K562 (cell line): ENCODE measurements at regions of chr20 and their contacts with region 1.

Region 1: DNA sequence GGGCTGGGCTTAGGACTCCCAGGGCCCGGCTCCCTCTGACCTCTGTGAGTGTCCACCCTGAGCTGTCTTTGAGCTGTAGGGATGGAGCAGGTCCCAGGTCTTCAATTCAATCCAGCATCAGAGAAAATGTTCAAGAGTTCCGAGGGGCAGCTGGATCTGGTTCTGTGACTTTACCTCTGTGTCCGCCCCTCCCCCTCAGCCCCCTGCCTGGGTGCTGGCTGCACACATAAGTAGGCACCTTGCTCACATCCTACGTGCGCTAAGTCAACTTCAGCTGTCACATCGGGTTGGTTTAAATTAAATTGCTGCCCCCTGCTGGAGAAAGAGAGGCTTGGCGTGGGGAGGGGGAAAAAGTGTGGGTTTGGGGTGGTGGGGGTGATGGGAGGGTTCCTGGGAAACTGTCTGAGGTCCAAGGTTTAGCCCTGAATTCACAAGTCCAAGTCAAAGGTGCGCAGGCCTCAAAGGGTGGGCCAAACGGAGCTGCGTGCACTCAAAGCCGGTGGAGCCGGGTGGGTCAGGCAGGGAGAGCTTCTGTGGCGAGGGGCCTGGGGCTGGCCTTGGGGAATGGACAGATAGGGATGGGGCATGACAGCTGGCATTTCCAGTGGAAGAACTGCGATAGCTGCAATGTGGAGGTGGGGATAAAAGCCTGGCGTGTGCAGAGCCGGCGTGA is 3.0 kb downstream of the WFDC5 start:
- DNase-seq: peak; percentile 43 to 54 (median 46)
- ATAC-seq: peak; percentile 72
- H3K4me3 ChIP-seq: no peak overlapping the region
- H3K27ac ChIP-seq: no peak overlapping the region
- H3K4me1 ChIP-seq: peaks cover 0 to 3% of the 10 kb centered on the region in 2 experiments; a peak in 1 of 5 replicates
- H3K27me3 ChIP-seq: peaks cover 14 to 51% of the 10 kb centered on the region in 2 experiments; a peak in 4 of 5 replicates
- CTCF ChIP-seq: peak; percentile 6 to 53 (median 48); a peak in 5 of 6 replicates
- EP300 ChIP-seq: no peak
- POLR2A ChIP-seq: no peak
- RAD21 ChIP-seq: peak in 1 of 2 experiments; percentile 32; a peak in 2 of 4 replicates

Region 2: DNA sequence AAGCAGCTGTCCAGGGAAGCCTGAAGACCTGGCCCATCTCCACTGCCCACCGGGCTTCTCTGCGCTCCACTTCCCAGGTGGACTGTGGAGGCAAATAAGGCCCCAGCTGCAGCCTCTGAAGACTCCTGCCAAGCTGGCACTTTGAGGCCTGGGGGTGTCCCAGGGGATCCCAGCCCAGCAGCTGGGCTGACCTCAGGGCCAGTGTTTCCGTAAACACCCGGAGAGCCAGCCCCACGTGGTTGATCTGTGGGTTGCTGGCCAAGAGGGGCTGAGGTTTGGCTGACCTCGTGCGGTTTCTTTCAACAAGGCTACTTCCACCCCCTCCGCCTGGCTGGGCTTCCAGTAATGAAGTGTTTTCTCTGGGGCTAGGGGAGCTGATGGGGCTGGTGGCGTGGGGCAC is 409.2 kb before region 1 on chr20:
- CTCF ChIA-PET with region 1: no interaction called
- POLR2A ChIA-PET with region 1: no interaction called
- in situ Hi-C with region 1: no loop called
- intact Hi-C with region 1: no loop called
- DNase-seq: no peak
- ATAC-seq: peak; percentile 51; the same call in 2 of the 3 replicates
- H3K4me3 ChIP-seq: no peak overlapping the region
- H3K27ac ChIP-seq: no peak overlapping the region
- H3K4me1 ChIP-seq: no peaks in the 10 kb centered on the region
- H3K27me3 ChIP-seq: peaks cover 33 to 55% of the 10 kb centered on the region in 2 experiments; a peak in 4 of 5 replicates
- CTCF ChIP-seq: no peak
- EP300 ChIP-seq: no peak
- POLR2A ChIP-seq: no peak
- RAD21 ChIP-seq: no peak

Region 3: DNA sequence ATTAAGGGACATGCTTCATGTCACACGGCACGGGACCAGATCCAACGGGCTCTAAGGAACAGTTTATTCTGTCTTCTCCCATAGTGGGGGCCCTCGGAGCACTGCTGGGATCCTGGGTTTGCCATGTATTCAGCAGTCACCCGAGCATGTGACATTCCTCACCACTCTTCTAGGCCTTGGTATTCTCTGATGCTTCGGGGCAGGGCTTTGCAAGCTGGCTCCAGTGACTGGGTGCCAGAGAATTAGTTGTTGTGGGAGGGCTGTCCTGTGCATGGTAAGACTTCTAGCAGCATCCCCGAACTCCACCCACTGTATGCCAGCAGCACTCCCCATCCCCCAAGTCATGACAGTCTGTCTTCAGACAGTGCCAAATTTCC is 391.3 kb before region 1 on chr20:
- CTCF ChIA-PET with region 1: no interaction called
- POLR2A ChIA-PET with region 1: no interaction called
- in situ Hi-C with region 1: no loop called
- intact Hi-C with region 1: no loop called
- DNase-seq: no peak
- ATAC-seq: no peak
- H3K4me3 ChIP-seq: no peak overlapping the region
- H3K27ac ChIP-seq: no peak overlapping the region
- H3K4me1 ChIP-seq: peaks cover 0 to 10% of the 10 kb centered on the region in 2 experiments; a peak in 2 of 5 replicates
- H3K27me3 ChIP-seq: peaks cover 34 to 74% of the 10 kb centered on the region in 2 experiments
- CTCF ChIP-seq: no peak
- EP300 ChIP-seq: no peak
- POLR2A ChIP-seq: no peak
- RAD21 ChIP-seq: no peak

Region 4: DNA sequence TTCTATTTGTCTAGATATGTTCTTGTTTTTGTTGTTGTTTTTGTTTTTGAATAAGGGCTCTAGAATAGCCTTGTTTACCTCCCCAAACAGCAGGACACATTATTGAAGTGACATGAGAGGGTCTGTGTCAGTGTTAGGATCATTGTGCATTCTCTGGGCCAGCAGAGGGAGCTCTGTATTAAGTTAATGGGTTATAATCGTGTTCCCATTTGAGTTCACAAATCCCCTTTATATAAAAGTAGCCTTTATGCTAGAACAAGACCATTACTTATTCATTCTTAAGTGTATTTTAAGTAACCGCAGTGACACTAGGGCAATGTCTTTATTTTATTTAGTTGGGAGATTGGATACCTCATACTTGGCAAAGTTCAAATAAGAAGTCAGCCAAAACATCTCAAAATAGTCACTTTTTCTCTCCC is 100.8 kb before region 1 on chr20:
- CTCF ChIA-PET with region 1: interaction called, 4 read pairs
- POLR2A ChIA-PET with region 1: no interaction called
- in situ Hi-C with region 1: no loop called
- intact Hi-C with region 1: loop called (anchors 5 kb)
- DNase-seq: peak; percentile 20 to 60 (median 34)
- ATAC-seq: peak; percentile 85
- H3K4me3 ChIP-seq: no peak overlapping the region
- H3K27ac ChIP-seq: no peak overlapping the region
- H3K4me1 ChIP-seq: no peaks in the 10 kb centered on the region
- H3K27me3 ChIP-seq: no peaks in the 10 kb centered on the region
- CTCF ChIP-seq: peak; percentile 55 to 86 (median 73)
- EP300 ChIP-seq: no peak
- POLR2A ChIP-seq: no peak
- RAD21 ChIP-seq: peak; percentile 53 to 84; a peak in 3 of 4 replicates

Region 5: DNA sequence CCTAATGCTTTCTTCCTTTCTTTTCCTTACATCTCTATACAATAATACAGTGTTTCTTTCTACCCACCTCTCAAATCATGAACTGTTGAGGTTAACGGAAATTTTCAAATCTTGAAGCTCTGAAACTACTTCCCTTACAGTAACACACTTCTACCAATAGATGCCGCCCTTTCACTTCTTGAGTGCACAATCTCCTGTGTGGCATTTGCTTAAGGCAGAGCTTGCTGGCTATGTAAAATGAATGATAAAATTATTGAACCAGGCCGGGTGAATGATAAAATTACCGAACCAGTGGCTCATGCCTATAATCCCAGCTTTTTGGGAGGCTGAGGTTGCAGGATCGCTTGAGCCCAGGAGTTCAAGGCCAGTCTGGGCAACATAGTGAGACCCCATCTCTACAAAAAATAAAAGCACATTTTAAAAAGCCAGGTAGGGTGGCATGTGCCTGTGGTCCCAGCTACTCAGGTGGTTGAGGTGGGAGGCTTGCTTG is 67.8 kb before region 1 on chr20:
- CTCF ChIA-PET with region 1: no interaction called
- POLR2A ChIA-PET with region 1: interaction called, 5 read pairs
- in situ Hi-C with region 1: no loop called
- intact Hi-C with region 1: loop called (anchors 5 kb)
- DNase-seq: peak; percentile 34 to 73 (median 52)
- ATAC-seq: peak; percentile 89
- H3K4me3 ChIP-seq: no peak overlapping the region
- H3K27ac ChIP-seq: no peak overlapping the region
- H3K4me1 ChIP-seq: no peaks in the 10 kb centered on the region
- H3K27me3 ChIP-seq: no peaks in the 10 kb centered on the region
- CTCF ChIP-seq: peak; percentile 70 to 92 (median 82)
- EP300 ChIP-seq: no peak
- POLR2A ChIP-seq: no peak
- RAD21 ChIP-seq: peak; percentile 74 to 79

Region 6: GRCh38 chr20:45266977-45267376 is 155.0 kb after region 1 on chr20:
- CTCF ChIA-PET with region 1: no interaction called
- POLR2A ChIA-PET with region 1: no interaction called
- in situ Hi-C with region 1: no loop called
- intact Hi-C with region 1: no loop called
- DNase-seq: no peak
- ATAC-seq: no peak
- H3K4me3 ChIP-seq: no peak overlapping the region
- H3K27ac ChIP-seq: no peak overlapping the region
- H3K4me1 ChIP-seq: no peaks in the 10 kb centered on the region
- H3K27me3 ChIP-seq: peaks cover 6% of the 10 kb centered on the region in 2 experiments
- CTCF ChIP-seq: no peak
- EP300 ChIP-seq: no peak
- POLR2A ChIP-seq: no peak
- RAD21 ChIP-seq: no peak

Region 7: DNA sequence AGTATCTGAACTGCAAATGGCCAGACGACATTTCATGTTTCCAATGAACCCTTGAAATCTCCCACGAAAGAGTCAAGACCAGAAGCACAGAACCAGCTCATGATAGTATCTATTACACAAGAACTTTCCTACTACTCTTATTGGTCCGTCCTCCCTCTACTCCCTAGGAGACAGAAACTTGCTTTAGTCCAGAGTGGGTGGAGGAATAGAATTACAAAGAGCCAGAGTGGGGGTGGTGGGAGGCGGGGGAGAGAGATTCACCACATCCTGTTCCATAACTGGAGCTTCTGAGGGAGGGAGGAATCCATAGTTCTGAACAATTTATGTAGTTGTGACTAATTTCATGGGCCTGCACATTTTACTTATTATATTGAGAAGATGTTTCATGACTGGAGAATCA is 499.1 kb after region 1 on chr20:
- CTCF ChIA-PET with region 1: no interaction called
- POLR2A ChIA-PET with region 1: no interaction called
- in situ Hi-C with region 1: no loop called
- intact Hi-C with region 1: no loop called
- DNase-seq: peak in 2 of 4 experiments; percentile 41 to 42
- ATAC-seq: peak; percentile 52; the same call in 2 of the 3 replicates
- H3K4me3 ChIP-seq: no peak overlapping the region
- H3K27ac ChIP-seq: no peak overlapping the region
- H3K4me1 ChIP-seq: no peaks in the 10 kb centered on the region; a peak in 1 of 5 replicates
- H3K27me3 ChIP-seq: no peaks in the 10 kb centered on the region
- CTCF ChIP-seq: no peak
- EP300 ChIP-seq: no peak
- POLR2A ChIP-seq: no peak
- RAD21 ChIP-seq: no peak